Activated CD4-positive, alpha-beta memory T cell treated with anti-CD3 and anti-CD28 coated beads for 36 hours (primary cell): ENCODE measurements at regions of chr16 and their contacts with region 1.

Region 1: DNA sequence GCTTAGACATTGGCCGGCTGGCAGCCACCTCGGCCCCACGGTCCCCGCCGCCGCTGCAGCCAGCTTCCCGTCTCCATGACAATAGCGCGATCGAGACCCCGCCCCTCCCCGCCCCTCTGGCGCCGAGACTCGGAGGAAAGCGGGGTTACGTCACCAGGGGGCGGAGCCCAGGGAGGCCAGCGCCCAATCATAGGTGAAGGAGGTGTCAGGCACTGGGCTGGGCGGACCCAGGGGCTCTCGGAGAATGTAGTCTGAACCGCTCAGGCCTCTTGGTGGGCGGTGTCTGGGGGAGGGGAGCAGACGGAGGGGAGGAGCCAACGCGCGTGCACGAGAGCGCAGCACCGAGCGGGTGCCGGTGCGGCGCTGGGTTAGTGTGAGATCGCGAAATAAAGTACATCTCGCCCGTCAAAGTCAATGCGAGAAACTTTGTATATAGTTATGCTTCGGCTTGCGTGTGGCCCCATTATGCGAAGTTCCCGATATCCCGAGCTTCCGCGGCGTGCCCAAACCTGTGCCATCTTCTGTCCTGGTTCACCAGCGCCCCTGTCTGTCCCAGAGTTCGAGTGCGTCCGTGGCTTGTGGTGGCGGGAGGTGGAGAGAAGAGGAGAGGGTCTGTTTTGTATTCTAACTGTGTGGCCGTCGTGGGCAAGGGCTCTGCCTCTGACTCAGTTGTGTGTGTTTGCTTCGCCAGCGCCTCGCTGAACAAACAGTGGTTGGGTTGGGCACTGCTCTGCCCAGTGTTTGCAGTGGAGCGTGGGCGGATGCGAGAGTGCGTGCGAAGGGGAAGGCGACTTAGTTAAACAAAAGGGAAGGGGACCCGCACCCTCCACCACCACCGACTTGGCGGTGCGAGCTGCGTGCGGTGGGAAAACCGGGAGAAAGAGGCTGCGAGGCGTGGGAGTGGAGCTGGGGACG is 1.3 kb upstream of the IRX5 start:
- DNase-seq: peak; percentile 97
- H3K4me3 Mint-ChIP-seq: peak overlapping the region; percentile 79
- H3K27ac Mint-ChIP-seq: peak overlapping the region; percentile 31
- H3K4me1 Mint-ChIP-seq: peaks cover 25% of the 10 kb centered on the region
- H3K27me3 Mint-ChIP-seq: peaks cover 61% of the 10 kb centered on the region

Region 2: DNA sequence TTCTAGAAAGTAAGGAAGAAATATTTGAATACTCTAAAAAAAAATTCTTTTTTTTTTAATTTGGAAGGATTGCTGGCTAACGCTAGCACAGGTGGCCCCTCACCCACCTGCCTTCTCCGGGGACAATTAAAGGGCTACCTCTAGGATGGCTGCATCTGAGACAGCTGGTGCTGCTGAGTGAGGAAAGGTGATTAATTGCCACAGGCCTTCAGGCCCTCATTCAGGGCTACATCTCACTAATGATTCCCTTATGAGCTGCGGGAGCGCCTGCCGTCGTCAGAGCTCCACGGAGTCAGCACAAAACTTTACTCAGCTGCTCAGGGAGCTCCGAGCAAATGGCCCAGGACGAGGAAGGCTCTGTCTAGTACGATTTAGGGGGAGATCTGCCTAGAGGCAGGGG is 1399.3 kb before region 1 on chr16:
- CTCF ChIA-PET with region 1: no interaction called
- POLR2A ChIA-PET with region 1: no interaction called
- intact Hi-C with region 1: loop called (anchors 1 kb)
- DNase-seq: no peak
- H3K4me3 Mint-ChIP-seq: no peak overlapping the region
- H3K27ac Mint-ChIP-seq: no peak overlapping the region
- H3K4me1 Mint-ChIP-seq: peaks cover 10% of the 10 kb centered on the region
- H3K27me3 Mint-ChIP-seq: no peaks in the 10 kb centered on the region

Region 3: DNA sequence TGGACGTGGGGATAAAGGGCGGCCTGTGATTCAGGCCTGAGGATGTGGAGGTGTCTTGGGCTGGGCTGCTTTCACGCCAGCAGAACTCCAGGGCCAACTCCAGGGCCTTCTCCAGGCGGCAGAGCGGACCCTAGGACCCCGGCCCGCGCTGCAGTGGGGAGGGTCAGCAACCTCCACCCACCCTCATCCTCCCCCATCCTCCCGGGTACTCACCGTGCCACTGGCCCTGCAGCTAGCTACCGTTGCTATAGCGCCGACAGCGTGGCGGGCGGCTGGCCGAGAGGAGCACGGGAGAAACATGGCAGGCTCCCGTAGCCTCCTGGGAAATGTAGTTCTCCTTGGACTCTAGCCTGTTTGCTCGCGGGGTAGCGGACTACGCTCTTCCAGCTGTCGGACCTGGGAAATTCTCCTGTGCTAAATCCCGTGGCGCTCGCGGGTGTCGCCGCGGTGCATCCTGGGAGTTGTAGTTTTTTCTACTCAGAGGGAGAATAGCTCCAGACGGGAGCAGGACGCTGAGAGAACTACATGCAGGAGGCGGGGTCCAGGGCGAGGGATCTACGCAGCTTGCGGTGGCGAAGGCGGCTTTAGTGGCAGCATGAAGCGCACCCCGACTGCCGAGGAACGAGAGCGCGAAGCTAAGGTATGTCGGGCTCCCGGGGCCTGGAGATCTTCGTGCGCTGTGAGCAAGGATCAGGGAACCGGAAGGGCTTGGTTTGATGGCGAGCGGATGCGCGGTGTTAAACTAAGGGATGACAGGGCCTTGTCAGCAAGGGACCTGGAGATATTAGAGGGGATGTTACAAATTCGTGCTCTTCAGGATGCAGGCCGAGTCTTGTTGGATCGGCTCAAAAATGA is 1225.5 kb before region 1 on chr16 and contains the starts of genes FTO and RPGRIP1L:
- CTCF ChIA-PET with region 1: no interaction called
- POLR2A ChIA-PET with region 1: no interaction called
- intact Hi-C with region 1: loop called (anchors 5 kb)
- DNase-seq: peak; percentile 99
- H3K4me3 Mint-ChIP-seq: peak within 1 kb of the TSS; percentile 99
- H3K27ac Mint-ChIP-seq: peak within 1 kb of the TSS; percentile 91
- H3K4me1 Mint-ChIP-seq: peaks cover 34% of the 10 kb centered on the region
- H3K27me3 Mint-ChIP-seq: no peaks in the 10 kb centered on the region
- total RNA-seq, gene FTO: 50.7 to 53.1 TPM
- total RNA-seq, gene RPGRIP1L: 6.2 to 6.5 TPM

Region 4: GRCh38 chr16:54620197-54620596 is 309.1 kb before region 1 on chr16:
- CTCF ChIA-PET with region 1: no interaction called
- POLR2A ChIA-PET with region 1: no interaction called
- intact Hi-C with region 1: no loop called
- DNase-seq: no peak
- H3K4me3 Mint-ChIP-seq: no peak overlapping the region
- H3K27ac Mint-ChIP-seq: no peak overlapping the region
- H3K4me1 Mint-ChIP-seq: no peaks in the 10 kb centered on the region
- H3K27me3 Mint-ChIP-seq: no peaks in the 10 kb centered on the region

Region 5: DNA sequence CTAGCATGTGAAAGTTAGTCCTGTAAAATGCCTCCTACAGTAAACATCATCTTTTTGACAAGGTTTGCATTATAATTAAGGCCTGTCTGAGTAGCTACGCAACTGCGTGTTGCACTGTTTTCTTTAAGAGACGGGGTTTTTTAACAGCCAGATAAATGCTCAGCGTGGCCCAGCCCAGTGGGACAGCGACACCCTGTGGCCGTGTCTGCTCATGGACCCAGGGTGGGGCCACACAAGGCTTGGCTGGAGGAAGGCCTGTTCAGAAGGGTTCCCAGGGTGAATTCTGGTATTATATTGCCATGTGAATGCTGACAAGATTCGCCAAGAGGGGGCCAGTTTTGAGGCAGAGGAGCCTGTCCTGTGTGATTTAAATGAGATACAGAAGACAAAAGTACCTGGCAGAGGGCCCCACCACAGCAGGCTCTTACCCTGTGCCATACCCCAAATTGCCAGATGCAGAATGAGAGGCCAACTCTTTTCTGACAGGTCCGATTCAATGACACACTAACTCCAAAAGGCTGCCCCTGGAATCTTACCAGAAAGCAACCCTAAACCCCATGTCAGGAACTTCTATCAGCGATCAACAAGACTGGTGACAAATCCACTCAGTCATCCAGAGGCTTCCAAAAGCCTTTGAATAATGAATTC is 328.7 kb after region 1 on chr16:
- CTCF ChIA-PET with region 1: no interaction called
- POLR2A ChIA-PET with region 1: no interaction called
- intact Hi-C with region 1: loop called (anchors 10 kb)
- DNase-seq: peak; percentile 65
- H3K4me3 Mint-ChIP-seq: no peak overlapping the region
- H3K27ac Mint-ChIP-seq: no peak overlapping the region
- H3K4me1 Mint-ChIP-seq: no peaks in the 10 kb centered on the region
- H3K27me3 Mint-ChIP-seq: no peaks in the 10 kb centered on the region